A673 (cell line): ENCODE measurements at regions of chr1 and their contacts with region 1.

Region 1: GRCh38 chr1:231029841-231030240 is 10.2 kb downstream of the FAM89A start:
- DNase-seq: no peak
- H3K4me3 ChIP-seq: no peak overlapping the region
- H3K27ac ChIP-seq: no peak overlapping the region
- H3K4me1 ChIP-seq: no peaks in the 10 kb centered on the region
- H3K27me3 ChIP-seq: no peaks in the 10 kb centered on the region
- CTCF ChIP-seq: no peak

Region 2: DNA sequence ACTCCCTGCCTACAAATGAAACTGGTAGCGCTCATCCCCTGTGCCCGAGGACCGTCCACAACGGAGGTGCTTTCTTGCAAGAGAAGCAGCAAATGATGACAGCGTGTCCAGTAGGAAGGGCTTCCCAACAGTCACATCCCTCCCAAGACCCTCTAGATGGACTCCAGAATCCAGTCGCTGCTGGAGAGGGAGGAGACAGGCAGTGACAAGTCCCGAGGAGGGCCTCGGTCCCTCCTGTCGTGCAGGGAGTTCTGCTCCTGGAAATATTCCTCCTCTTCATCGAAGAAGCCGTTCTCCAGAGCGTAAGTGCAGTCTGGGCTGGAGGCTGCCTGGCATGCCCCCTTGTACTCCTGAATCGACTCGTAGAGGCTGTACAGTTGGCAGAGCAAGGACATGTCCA is 10.1 kb before region 1 on chr1:
- CTCF ChIA-PET with region 1: no interaction called
- POLR2A ChIA-PET with region 1: interaction called, 16 read pairs
- intact Hi-C with region 1: no loop called
- DNase-seq: no peak
- H3K4me3 ChIP-seq: no peak overlapping the region
- H3K27ac ChIP-seq: no peak overlapping the region
- H3K4me1 ChIP-seq: peaks cover 6% of the 10 kb centered on the region
- H3K27me3 ChIP-seq: no peaks in the 10 kb centered on the region
- CTCF ChIP-seq: no peak

Region 3: GRCh38 chr1:232192829-232193783 is 1163.3 kb after region 1 on chr1:
- CTCF ChIA-PET with region 1: no interaction called
- POLR2A ChIA-PET with region 1: no interaction called
- intact Hi-C with region 1: no loop called
- DNase-seq: no peak
- H3K4me3 ChIP-seq: no peak overlapping the region
- H3K27ac ChIP-seq: no peak overlapping the region
- H3K4me1 ChIP-seq: no peaks in the 10 kb centered on the region
- H3K27me3 ChIP-seq: no peaks in the 10 kb centered on the region
- CTCF ChIP-seq: no peak